ENCODE measurements at regions of chr17 and their contacts with region 1.

Region 1: GRCh38 chr17:74110467-74110866 is 93.0 kb upstream of the RPL38 start:
- DNase-seq: no peak

Region 2: GRCh38 chr17:73914536-73915274 is 195.8 kb before region 1 on chr17:
- CTCF ChIA-PET with region 1: no interaction called
- POLR2A ChIA-PET with region 1: no interaction called
- DNase-seq: no peak

Region 3: DNA sequence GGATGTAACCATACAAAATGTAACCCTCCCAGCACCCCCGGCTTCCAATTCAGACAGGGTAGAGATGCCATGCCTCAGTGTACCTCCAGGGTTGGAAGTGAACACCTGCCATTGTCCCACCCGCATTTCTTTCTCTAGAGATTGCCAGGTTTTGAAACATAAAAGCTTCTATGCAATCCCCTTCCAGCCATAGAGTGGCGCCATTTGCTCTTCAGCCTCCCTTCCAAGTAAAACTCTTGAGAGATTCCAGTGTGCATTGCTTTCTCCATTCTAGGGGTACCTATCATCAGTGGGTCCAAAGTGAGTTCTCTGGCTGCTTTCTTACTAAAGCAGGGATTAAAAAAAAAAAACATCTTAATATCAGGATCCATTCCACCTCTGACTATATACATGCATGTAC is 40.1 kb before region 1 on chr17:
- CTCF ChIA-PET with region 1: no interaction called
- POLR2A ChIA-PET with region 1: no interaction called
- DNase-seq: no peak

Region 4: GRCh38 chr17:74123350-74123749 is 12.9 kb after region 1 on chr17:
- CTCF ChIA-PET with region 1: interaction called, 10 read pairs
- POLR2A ChIA-PET with region 1: no interaction called
- DNase-seq: no peak